GM12878 (cell line): ENCODE measurements at regions of chr12 and their contacts with region 1.

Region 1: DNA sequence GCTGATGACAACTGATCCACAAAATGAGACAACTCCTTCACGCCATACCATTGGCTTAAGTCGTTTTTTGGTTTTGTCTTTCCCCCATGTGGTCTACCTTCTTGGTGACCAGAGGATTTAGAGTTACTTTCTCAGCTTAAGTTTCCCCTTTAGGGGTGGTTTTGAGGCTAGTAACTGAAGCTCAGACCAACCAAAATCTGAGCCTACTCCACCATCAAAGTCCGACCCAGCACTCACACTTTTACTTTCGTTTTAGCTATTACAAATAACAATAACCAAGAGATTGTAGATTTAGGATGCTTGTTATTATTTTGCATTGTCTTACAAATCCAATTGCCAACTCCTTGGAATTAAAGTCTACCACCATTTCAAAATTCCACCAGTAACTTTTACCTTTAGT is 130.6 kb upstream of the MDM1 start:
- DNase-seq: no peak
- ATAC-seq: peak; percentile 88
- H3K4me3 ChIP-seq: peak overlapping the region; percentile 9; the same call in 1 of the 2 replicates
- H3K27ac ChIP-seq: peak overlapping the region; percentile 13; the same call in 1 of the 2 replicates
- H3K4me1 ChIP-seq: no peaks in the 10 kb centered on the region
- H3K27me3 ChIP-seq: no peaks in the 10 kb centered on the region
- CTCF ChIP-seq: no peak
- EP300 ChIP-seq: no peak
- POLR2A ChIP-seq: no peak
- RAD21 ChIP-seq: no peak

Region 2: GRCh38 chr12:68477261-68477772 is 14.5 kb after region 1 on chr12:
- CTCF ChIA-PET with region 1: interaction called, 4 read pairs
- POLR2A ChIA-PET with region 1: interaction called, 4 read pairs
- RAD21 ChIA-PET with region 1: interaction called, 10 read pairs
- SMC1A ChIA-PET with region 1: interaction called, 28 read pairs
- in situ Hi-C with region 1: no loop called
- intact Hi-C with region 1: no loop called
- DNase-seq: no peak
- ATAC-seq: no peak
- H3K4me3 ChIP-seq: no peak overlapping the region
- H3K27ac ChIP-seq: no peak overlapping the region
- H3K4me1 ChIP-seq: peaks cover 18% of the 10 kb centered on the region
- H3K27me3 ChIP-seq: no peaks in the 10 kb centered on the region
- CTCF ChIP-seq: no peak
- EP300 ChIP-seq: no peak
- POLR2A ChIP-seq: no peak
- RAD21 ChIP-seq: no peak